ENCODE measurements at regions of chr12 and their contacts with region 1.

Region 1: DNA sequence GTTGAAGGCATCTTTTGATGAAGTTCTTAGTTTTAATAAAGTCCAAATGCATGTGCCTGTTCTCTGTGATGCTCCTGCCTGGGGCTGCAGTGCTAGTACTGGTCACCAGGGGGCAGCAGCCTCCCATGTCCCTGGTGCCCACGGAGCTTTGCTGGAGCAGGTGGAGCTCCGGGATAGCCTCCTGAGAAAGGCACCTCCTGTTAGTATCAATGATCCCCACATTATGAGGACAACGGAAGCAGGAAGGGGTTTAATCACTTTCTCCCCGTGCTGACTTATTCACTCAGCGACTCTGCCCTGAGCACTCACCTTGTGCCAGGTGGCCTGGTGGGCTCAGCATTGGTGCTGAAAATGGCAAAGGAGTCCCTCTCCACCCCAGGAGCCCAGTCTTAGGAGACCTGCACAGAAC is 123.0 kb upstream of the PZP start:
- DNase-seq: peak; percentile 69
- H3K4me3 Mint-ChIP-seq: no peak overlapping the region
- H3K27ac Mint-ChIP-seq: no peak overlapping the region
- H3K4me1 Mint-ChIP-seq: peaks cover 29% of the 10 kb centered on the region
- H3K27me3 Mint-ChIP-seq: no peaks in the 10 kb centered on the region

Region 2: DNA sequence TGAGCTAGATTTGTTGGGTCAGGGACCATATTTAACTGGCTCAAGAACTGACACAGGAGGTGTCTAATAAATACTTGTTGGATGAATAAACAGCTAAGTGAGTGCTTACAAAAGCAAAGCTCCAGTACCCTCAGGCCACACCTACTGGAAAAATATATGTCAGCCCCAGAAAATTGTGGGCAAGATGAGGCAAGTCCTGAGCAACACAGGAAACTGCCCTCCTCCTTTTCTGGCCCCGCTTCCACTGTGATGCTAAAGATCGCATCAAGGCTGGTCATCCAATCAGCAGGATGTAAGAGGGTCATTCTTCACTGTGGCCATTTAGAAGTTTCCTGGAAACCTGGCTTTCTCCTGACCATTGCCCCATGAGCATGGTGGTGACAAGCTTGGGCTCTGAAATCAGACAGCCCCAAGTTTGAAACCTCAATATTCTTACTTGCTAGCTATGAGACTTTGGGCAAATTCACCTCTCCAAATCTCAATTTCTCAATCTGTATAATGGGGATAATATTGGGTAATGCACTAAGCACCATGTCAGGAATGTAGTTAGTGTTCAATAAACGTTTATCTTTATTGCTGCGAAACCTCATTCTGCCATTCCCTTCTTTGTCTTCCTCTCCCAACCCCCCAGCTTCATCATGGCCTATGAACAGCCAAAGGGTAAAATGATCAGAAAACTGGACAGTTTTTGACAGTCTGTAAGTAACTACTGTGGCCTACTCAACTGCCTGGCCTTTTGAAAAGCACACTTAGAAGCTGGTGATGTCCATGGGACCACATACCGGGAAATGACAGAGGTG is 16.3 kb after region 1 on chr12:
- CTCF ChIA-PET with region 1: interaction called, 13 read pairs
- POLR2A ChIA-PET with region 1: no interaction called
- DNase-seq: no peak
- H3K4me3 Mint-ChIP-seq: no peak overlapping the region
- H3K27ac Mint-ChIP-seq: no peak overlapping the region
- H3K4me1 Mint-ChIP-seq: peaks cover 24% of the 10 kb centered on the region
- H3K27me3 Mint-ChIP-seq: no peaks in the 10 kb centered on the region

Measured in activated CD4-positive, alpha-beta T cell treated with anti-CD3 and anti-CD28 coated beads, Interleukin-2, amount 10 ng/mL, durations not matched to agents 7 days and 5 days (primary cell).